ENCODE measurements at regions of chr21 and their contacts with region 1.

Region 1: DNA sequence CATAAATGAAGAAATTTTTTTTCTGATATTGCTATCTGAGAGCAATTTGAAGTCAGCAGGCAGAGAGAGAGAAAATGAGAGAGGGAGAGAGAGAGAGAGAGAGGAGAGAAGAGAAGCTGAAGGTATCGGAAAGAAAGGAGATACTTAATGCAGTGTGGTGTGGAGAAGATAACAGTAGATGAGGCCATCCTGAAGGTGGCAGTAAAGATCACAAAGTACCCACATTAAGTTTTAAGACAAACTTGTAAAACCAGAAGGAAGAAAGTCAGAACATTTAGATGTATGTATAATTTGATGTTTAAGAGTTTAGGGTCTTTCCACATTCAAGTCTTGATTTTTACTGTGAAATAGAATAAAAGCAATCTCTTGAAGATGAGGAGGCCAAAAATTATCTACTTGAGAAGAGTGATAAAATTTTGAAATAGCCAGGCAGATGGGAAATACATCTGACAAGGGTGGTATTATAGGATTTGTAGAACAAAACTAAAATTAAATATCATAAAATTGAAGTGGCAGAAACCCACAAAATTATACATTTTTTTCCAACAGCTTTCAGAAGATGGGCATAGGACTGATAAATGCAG is 1753.4 kb downstream of the MRPL39 start:
- DNase-seq: no peak
- H3K4me3 Mint-ChIP-seq: no peak overlapping the region
- H3K27ac Mint-ChIP-seq: no peak overlapping the region
- H3K4me1 Mint-ChIP-seq: peaks cover 9% of the 10 kb centered on the region
- H3K27me3 Mint-ChIP-seq: peaks cover 8% of the 10 kb centered on the region

Region 2: DNA sequence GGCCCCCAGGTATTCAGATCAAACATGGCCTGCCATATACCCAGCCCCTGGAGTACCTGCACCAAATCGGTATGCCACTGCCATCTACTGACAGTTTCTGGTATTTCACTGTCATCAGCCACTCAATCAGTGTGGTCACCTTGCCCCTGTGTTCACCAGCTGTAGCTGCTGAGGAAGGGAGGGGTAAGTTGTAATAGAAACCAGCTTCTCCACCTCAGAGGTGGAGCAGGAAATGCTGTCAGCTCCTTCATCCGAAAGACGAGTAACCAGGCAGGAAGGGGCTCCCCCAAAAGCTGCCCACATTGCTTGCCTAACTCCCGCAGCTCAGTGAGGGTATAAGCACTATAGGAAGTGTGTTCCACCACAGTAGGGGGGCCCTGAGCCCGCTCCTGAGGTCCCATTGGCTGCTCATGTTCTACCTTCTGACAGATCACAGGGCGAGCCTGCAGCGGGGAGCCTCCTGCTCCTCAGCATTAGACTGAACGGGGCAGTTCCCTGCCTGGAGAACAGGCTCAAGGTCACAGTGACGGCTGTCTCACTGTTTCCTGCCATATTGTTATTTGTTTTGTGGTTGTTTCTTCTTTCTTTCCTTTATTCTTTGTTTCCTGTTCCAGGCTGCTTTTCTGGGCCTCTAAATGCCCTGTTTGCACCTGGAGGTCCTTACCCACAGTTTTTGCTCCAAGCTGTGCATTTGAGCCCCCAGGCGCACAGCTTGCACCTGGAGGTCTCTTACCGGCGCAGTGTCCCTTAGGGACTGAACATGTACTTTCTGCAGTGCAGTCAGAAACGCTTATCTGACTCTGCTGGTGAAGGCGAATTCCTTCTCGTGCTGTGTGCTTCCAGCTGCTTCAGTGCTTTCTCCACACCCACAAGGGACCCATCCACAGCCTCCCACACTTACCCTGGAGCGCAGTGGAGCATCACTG is 115.1 kb after region 1 on chr21:
- CTCF ChIA-PET with region 1: interaction called, 29 read pairs
- DNase-seq: peak; percentile 91
- H3K4me3 Mint-ChIP-seq: peak overlapping the region; percentile 63
- H3K27ac Mint-ChIP-seq: peak overlapping the region; percentile 92
- H3K4me1 Mint-ChIP-seq: peaks cover 29% of the 10 kb centered on the region
- H3K27me3 Mint-ChIP-seq: peaks cover 3% of the 10 kb centered on the region

Measured in activated naive CD4-positive, alpha-beta T cell treated with anti-CD3 and anti-CD28 coated beads, Interleukin-2, amount 10 ng/mL, durations not matched to agents 7 days and 5 days (primary cell).